A673 (cell line): ENCODE measurements at regions of chr3 and their contacts with region 1.

Region 1: GRCh38 chr3:81242871-81243270 is 518.6 kb downstream of the GBE1 start:
- DNase-seq: peak; percentile 52
- H3K4me3 ChIP-seq: no peak overlapping the region
- H3K27ac ChIP-seq: no peak overlapping the region
- H3K4me1 ChIP-seq: no peaks in the 10 kb centered on the region
- H3K27me3 ChIP-seq: no peaks in the 10 kb centered on the region
- CTCF ChIP-seq: peak; percentile 62

Region 2: GRCh38 chr3:80785470-80785869 is 457.4 kb before region 1 on chr3:
- CTCF ChIA-PET with region 1: no interaction called
- POLR2A ChIA-PET with region 1: no interaction called
- intact Hi-C with region 1: loop called (anchors 5 kb)
- DNase-seq: peak; percentile 15
- H3K4me3 ChIP-seq: no peak overlapping the region
- H3K27ac ChIP-seq: no peak overlapping the region
- H3K4me1 ChIP-seq: no peaks in the 10 kb centered on the region
- H3K27me3 ChIP-seq: no peaks in the 10 kb centered on the region
- CTCF ChIP-seq: peak; percentile 37; the same call in 1 of the 2 replicates

Region 3: GRCh38 chr3:81289676-81290075 is 46.8 kb after region 1 on chr3:
- CTCF ChIA-PET with region 1: no interaction called
- POLR2A ChIA-PET with region 1: no interaction called
- intact Hi-C with region 1: no loop called
- DNase-seq: no peak
- H3K4me3 ChIP-seq: no peak overlapping the region
- H3K27ac ChIP-seq: no peak overlapping the region
- H3K4me1 ChIP-seq: no peaks in the 10 kb centered on the region
- H3K27me3 ChIP-seq: no peaks in the 10 kb centered on the region
- CTCF ChIP-seq: no peak

Region 4: GRCh38 chr3:81445712-81446111 is 202.8 kb after region 1 on chr3:
- CTCF ChIA-PET with region 1: no interaction called
- POLR2A ChIA-PET with region 1: interaction called, 20 read pairs
- intact Hi-C with region 1: no loop called
- DNase-seq: no peak
- H3K4me3 ChIP-seq: no peak overlapping the region
- H3K27ac ChIP-seq: no peak overlapping the region
- H3K4me1 ChIP-seq: no peaks in the 10 kb centered on the region
- H3K27me3 ChIP-seq: no peaks in the 10 kb centered on the region
- CTCF ChIP-seq: no peak

Region 5: GRCh38 chr3:81462921-81463320 is 220.1 kb after region 1 on chr3:
- CTCF ChIA-PET with region 1: no interaction called
- POLR2A ChIA-PET with region 1: no interaction called
- intact Hi-C with region 1: no loop called
- DNase-seq: no peak
- H3K4me3 ChIP-seq: no peak overlapping the region
- H3K27ac ChIP-seq: no peak overlapping the region
- H3K4me1 ChIP-seq: no peaks in the 10 kb centered on the region
- H3K27me3 ChIP-seq: no peaks in the 10 kb centered on the region
- CTCF ChIP-seq: no peak